Motor neuron (in vitro differentiated cells): ENCODE measurements at regions of chr2 and their contacts with region 1.

Region 1: GRCh38 chr2:57890464-57890863 is 156.1 kb upstream of the VRK2 start:
- ATAC-seq: peak in 7 of 8 experiments; percentile 33 to 85 (median 59)
- H3K4me3 ChIP-seq: no peak overlapping the region
- H3K27ac ChIP-seq: no peak overlapping the region
- H3K4me1 ChIP-seq: peaks cover 13 to 26% of the 10 kb centered on the region in 2 donors

Region 2: DNA sequence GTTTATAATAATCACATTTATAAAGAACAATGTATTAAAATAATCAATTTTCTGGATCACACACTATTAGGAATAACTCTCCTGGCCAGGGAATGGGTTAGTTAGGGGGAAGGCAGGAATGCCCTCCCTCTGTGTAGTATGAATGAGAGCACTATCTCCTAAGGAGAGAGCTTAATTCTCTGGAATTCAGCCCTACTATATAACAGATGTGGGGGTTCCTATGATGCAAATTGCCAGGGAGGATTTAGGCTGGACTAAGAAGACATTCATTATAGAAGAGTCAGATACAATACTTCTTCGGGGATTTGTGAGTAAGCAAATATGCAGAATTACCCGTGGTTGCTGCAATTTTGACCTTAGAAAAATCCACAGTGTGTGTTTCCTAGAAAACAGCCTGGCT is 93.9 kb before region 1 on chr2:
- in situ Hi-C with region 1: loop called in 1 of 9 experiments (anchors 25 kb)
- ATAC-seq: peak in 2 of 8 experiments; percentile 18 to 46
- H3K4me3 ChIP-seq: no peak overlapping the region
- H3K27ac ChIP-seq: no peak overlapping the region
- H3K4me1 ChIP-seq: no peaks in the 10 kb centered on the region